Ascending aorta (tissue), 2 donors: ENCODE measurements at regions of chr12 and their contacts with region 1.

Region 1: GRCh38 chr12:57151741-57152630 is 4.6 kb upstream of the LRP1-AS start:
- DNase-seq: no peak
- H3K4me3 ChIP-seq: peak overlapping the region in 1 of 2 donors; percentile 29
- H3K27ac ChIP-seq: peak overlapping the region; percentile 89 to 98
- H3K4me1 ChIP-seq: peaks cover 61 to 69% of the 10 kb centered on the region in 2 donors
- H3K27me3 ChIP-seq: no peaks in the 10 kb centered on the region
- CTCF ChIP-seq: no peak

Region 2: GRCh38 chr12:57078519-57079404 is 73.2 kb before region 1 on chr12 and contains the start of gene NEMP1:
- intact Hi-C with region 1: loop called (anchors 2 kb)
- DNase-seq: peak; percentile 98 to 99
- H3K4me3 ChIP-seq: peak within 1 kb of the TSS; percentile 68 to 70
- H3K27ac ChIP-seq: peak within 1 kb of the TSS; percentile 76 to 81
- H3K4me1 ChIP-seq: peaks cover 7 to 11% of the 10 kb centered on the region in 2 donors
- H3K27me3 ChIP-seq: no peaks in the 10 kb centered on the region
- CTCF ChIP-seq: no peak
- total RNA-seq, gene NEMP1: 7.7 TPM

Region 3: GRCh38 chr12:57175428-57176138 is 23.6 kb after region 1 on chr12:
- intact Hi-C with region 1: loop called (anchors 2 kb)
- DNase-seq: peak; percentile 34 to 92
- H3K4me3 ChIP-seq: no peak overlapping the region
- H3K27ac ChIP-seq: peak overlapping the region; percentile 53 to 57
- H3K4me1 ChIP-seq: no peaks in the 10 kb centered on the region
- H3K27me3 ChIP-seq: no peaks in the 10 kb centered on the region
- CTCF ChIP-seq: peak; percentile 79 to 91 (median 90)